Psoas muscle (tissue), 8 donors: ENCODE measurements at regions of chr3 and their contacts with region 1.

Region 1: DNA sequence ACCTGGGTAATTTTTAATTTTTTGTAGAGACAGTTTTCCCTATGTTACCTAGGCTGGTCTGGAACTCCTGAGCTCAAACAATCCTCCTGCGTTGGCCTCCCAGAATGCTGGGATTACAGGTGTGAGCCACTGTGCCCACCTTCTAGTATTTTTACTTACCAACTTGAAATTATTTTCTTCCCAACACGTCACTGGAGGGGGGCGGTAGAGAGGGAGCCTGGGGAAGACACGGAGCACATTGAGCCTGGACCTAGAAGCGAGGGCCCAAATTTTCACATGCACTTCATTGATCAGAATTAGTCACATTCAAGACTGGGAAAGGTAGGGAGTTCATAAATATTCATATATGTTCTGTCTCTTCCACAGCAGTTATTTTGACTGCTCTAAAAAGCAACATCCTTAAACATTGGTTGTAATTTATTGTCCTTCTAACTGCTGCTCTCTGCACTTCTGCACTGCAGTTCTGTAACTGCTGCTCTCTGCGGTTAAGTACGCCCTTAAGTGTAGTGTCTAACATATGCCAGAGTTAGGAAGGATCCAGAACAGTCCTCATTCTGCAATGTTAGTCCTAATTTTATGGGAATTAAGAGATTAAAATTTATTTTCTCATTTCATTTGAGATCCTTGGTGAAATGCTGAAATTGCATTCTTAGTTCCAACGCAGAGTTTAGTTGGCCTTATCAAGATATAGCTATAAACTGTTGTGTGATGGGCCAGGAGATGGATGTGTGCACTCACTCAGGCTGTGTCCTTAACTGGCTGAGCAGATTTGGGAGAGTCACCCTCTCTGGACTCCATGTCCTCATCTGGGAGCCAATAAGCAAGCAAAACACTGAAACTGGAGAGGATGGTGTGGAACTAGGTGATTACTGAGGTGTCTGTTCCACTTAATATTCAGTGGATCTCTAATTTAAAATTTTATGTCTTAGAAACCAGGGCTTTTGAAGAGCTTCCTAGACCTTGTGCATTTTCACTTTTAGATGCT is 98.2 kb downstream of the STRIT1 start:
- DNase-seq: no peak
- ATAC-seq: peak in 1 of 4 donors; percentile 28
- H3K4me3 ChIP-seq: no peak overlapping the region
- H3K27ac ChIP-seq: peak overlapping the region; percentile 90
- H3K4me1 ChIP-seq: peaks cover 29% of the 10 kb centered on the region
- H3K27me3 ChIP-seq: no peaks in the 10 kb centered on the region
- CTCF ChIP-seq: no peak

Region 2: GRCh38 chr3:155292133-155292532 is 96.9 kb after region 1 on chr3:
- intact Hi-C with region 1: loop called in 1 of 2 experiments (anchors 2 kb)
- DNase-seq: no peak
- ATAC-seq: peak; percentile 39 to 76 (median 52)
- H3K4me3 ChIP-seq: peak overlapping the region; percentile 63
- H3K27ac ChIP-seq: peak overlapping the region; percentile 82
- H3K4me1 ChIP-seq: no peaks in the 10 kb centered on the region
- H3K27me3 ChIP-seq: no peaks in the 10 kb centered on the region
- CTCF ChIP-seq: no peak